Body of pancreas (tissue), 4 donors: ENCODE measurements at regions of chr18 and their contacts with region 1.

Region 1: DNA sequence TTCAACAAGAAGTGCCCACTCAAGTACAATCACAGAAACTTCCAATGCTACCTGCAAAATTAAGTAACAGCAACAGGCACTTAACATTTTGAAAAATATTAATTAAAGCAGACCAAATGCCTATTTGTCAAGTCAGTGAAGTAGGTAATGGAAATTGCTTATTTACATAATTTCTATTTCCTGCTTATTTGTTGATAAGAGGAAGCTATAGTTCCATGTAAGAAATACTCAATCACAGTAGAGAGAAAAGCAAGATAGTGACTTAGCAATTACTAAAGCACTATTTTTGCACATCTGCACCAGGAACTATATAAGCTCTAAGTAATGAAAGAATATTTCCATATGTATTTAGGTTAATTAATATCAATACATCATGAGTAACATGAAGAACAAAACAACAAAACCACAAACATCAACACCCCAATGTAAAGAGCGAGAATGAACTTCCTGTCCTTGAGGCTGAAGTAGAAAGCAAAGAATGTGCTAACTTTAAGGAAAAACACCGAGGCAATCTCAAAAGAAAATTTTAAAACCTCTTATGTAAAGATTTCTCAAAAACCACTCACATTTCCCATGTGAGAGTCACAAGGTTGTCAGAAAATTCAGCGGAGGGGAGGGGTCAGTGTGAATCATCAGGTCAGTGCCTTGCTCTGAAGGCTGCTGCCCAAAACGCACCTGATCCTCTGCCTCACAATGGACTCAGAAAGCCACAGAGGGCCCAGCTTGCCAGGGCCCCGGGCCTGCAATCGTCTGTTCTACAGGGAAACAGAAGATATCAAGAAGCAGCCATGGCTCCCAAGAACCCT is 12.5 kb downstream of the NPC1 start:
- DNase-seq: peak in 1 of 4 donors; percentile 12
- ATAC-seq: no peak
- H3K4me3 ChIP-seq: no peak overlapping the region
- H3K27ac ChIP-seq: no peak overlapping the region
- H3K4me1 ChIP-seq: no peaks in the 10 kb centered on the region
- H3K27me3 ChIP-seq: no peaks in the 10 kb centered on the region
- CTCF ChIP-seq: no peak
- POLR2A ChIP-seq: no peak

Region 2: DNA sequence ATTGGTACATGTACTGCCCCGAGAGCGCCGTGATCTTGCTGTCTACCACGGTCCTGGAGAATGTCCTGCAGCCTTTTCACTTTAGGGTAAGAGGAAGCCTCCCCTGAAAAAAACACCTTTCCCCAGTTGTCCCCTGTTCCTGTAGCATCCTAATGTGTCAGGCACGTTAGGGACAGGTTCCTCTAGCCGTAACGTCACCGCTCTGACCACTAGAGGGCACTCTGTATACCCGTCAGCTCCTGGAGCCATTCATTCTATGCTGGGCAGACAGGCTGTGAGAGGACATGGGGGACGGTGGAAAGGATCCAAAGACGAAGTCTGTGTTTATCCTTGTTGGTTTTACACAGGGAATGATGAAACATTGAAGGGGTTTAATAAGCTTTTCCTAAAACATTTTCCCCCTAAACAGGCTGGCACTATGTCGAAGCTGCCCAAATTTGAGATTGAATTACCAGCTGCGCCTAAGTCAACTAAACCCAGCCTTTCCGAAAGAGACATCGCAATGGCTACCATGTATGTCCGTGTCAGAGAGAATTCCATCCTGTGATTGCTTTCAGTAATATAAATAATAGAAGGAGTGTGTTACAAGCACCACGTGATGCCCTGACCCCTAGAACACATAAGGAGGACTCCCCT is 57.8 kb before region 1 on chr18:
- intact Hi-C with region 1: loop called (anchors 10 kb)
- DNase-seq: peak; percentile 75 to 80 (median 76)
- ATAC-seq: peak; percentile 91
- H3K4me3 ChIP-seq: no peak overlapping the region
- H3K27ac ChIP-seq: no peak overlapping the region
- H3K4me1 ChIP-seq: no peaks in the 10 kb centered on the region
- H3K27me3 ChIP-seq: no peaks in the 10 kb centered on the region
- CTCF ChIP-seq: peak; percentile 53 to 86 (median 74)
- POLR2A ChIP-seq: no peak